AG04449 (cell line): ENCODE measurements at regions of chr11 and their contacts with region 1.

Region 1: GRCh38 chr11:73661035-73661628 is 14.8 kb downstream of the PLEKHB1 start:
- DNase-seq: peak; percentile 16
- H3K4me3 ChIP-seq: peak overlapping the region; percentile 54
- CTCF ChIP-seq: peak; percentile 98

Region 2: DNA sequence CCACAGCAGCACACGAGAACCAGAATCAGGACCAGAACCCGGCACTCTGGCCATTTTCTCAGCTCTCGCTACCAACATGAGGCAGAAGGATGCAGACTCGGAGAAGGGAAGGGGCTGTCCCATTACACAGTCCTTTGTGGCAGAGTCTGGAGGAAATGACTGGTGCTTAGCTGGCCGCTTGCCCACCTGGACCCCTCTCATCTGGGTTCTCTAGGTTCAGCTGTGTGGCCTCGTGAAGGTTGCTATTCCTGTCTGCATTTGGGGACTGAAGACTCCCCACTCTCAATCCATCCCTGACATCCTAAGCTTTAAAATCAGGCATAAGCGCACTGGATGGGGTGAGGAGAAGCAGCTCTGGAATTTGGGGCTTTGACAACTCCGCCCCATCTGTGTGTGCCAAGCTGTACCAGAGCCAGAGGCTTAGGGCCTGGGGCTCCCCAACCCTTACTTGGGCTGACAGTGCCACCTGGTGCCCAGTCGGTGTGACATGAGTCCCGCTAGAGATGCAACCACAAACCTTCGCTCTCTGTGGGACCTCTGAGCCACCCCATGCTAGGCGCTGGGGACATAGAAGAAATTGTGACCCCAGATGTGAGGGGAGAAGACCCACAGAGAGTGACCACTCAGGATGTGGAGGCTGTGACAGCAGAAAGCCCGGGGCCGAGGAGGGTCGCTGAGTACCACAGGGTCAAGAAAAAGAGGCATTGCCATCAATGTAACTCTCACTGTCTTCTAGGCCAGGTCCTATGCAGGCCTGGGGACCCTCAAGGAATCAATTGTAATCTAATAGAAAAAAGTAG is 483.2 kb before region 1 on chr11:
- CTCF ChIA-PET with region 1: no interaction called
- POLR2A ChIA-PET with region 1: no interaction called
- DNase-seq: peak; percentile 36
- H3K4me3 ChIP-seq: no peak overlapping the region
- CTCF ChIP-seq: peak; percentile 85

Region 3: GRCh38 chr11:73360336-73361013 is 300.7 kb before region 1 on chr11:
- CTCF ChIA-PET with region 1: interaction called, 145 read pairs
- POLR2A ChIA-PET with region 1: no interaction called
- DNase-seq: no peak
- H3K4me3 ChIP-seq: no peak overlapping the region
- CTCF ChIP-seq: peak; percentile 46

Region 4: DNA sequence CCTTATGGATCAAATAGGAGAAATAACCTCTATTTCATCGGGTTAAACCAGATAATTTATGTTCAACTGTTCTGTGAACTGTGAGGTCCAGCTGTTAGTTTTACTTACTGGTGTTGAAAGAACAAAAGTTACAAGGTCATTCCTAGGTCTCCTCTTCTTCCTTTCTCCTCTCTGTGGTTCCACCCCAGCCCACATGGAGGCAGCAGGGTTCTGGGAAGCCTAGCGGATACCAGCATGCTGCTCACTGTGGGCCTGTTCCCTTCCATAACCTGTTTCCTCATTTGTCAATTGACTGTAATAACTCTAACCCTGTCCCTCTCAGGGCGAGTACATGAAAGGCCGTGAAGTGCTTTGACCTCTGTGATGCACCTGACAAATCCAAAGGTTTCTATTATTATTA is 257.1 kb before region 1 on chr11:
- CTCF ChIA-PET with region 1: interaction called, 248 read pairs
- POLR2A ChIA-PET with region 1: interaction called, 3 read pairs
- DNase-seq: no peak
- H3K4me3 ChIP-seq: no peak overlapping the region
- CTCF ChIP-seq: peak; percentile 80

Region 5: GRCh38 chr11:73478738-73479347 is 182.3 kb before region 1 on chr11:
- CTCF ChIA-PET with region 1: interaction called, 69 read pairs
- POLR2A ChIA-PET with region 1: no interaction called
- DNase-seq: no peak
- H3K4me3 ChIP-seq: no peak overlapping the region
- CTCF ChIP-seq: peak; percentile 76

Region 6: DNA sequence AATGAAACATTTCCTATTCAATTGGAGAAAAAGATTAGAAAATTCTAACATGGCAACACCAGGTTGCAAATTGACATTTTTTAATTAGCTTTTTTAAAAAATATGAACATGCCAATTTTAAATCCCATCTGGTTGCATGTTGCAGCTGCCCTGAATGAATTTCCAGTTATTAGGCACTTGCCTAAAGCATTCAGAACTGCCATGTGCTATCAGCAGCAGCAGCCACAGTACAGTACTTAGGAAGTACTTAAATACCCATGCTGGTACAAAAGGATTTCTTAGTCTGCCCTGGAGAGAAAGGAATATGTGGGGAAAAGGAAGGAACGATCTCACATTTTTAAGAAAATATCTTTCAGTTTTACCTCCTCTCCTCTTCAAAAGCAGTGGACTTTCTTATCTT is 109.5 kb before region 1 on chr11:
- CTCF ChIA-PET with region 1: no interaction called
- POLR2A ChIA-PET with region 1: no interaction called
- DNase-seq: no peak
- H3K4me3 ChIP-seq: no peak overlapping the region
- CTCF ChIP-seq: no peak

Region 7: GRCh38 chr11:73647459-73648100 is 13.6 kb before region 1 on chr11:
- CTCF ChIA-PET with region 1: interaction called, 100 read pairs
- POLR2A ChIA-PET with region 1: no interaction called
- DNase-seq: no peak
- H3K4me3 ChIP-seq: peak overlapping the region; percentile 39
- CTCF ChIP-seq: no peak